ENCODE measurements at regions of chr11 and their contacts with region 1.

Region 1: GRCh38 chr11:120511116-120511819 is at the start of gene GRIK4:
- DNase-seq: peak; percentile 79 to 85
- ATAC-seq: peak; percentile 85 to 94 (median 90)
- H3K4me3 ChIP-seq: peak within 1 kb of the TSS in 9 of 10 donors; percentile 36 to 51 (median 44)
- H3K27ac ChIP-seq: no peak within 1 kb of the TSS
- H3K4me1 ChIP-seq: no peaks in the 10 kb centered on the region
- H3K27me3 ChIP-seq: peaks cover 4 to 84% (median 50%) of the 10 kb centered on the region in 7 donors
- CTCF ChIP-seq: peak; percentile 89 to 95 (median 94)
- total RNA-seq, gene GRIK4: 0.12 to 0.85 (median 0.46) TPM in 5 of 10 donors, not detected in the others

Region 2: DNA sequence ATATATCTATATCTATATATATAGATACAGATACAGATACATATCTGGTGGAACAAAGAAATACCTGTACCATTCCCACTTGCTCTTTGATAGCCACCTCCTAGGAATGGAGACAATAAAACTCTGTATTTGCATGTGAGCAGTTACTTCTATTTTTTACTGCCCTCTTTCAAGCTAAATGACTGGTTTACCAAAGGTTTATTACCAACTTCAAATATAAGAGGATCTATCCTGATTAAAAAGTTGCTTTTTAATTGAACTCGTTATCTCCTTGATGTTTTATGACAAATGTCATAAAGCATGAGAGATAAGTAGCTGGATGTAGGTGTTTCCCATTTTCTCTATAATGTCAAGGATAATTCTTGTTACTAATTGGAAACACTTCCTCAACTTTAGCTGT is 21.5 kb before region 1 on chr11:
- intact Hi-C with region 1: no loop called
- DNase-seq: no peak
- ATAC-seq: no peak
- H3K4me3 ChIP-seq: no peak overlapping the region
- H3K27ac ChIP-seq: no peak overlapping the region
- H3K4me1 ChIP-seq: peaks cover 0 to 11% (median 0%) of the 10 kb centered on the region in 9 donors
- H3K27me3 ChIP-seq: no peaks in the 10 kb centered on the region
- CTCF ChIP-seq: no peak

Region 3: DNA sequence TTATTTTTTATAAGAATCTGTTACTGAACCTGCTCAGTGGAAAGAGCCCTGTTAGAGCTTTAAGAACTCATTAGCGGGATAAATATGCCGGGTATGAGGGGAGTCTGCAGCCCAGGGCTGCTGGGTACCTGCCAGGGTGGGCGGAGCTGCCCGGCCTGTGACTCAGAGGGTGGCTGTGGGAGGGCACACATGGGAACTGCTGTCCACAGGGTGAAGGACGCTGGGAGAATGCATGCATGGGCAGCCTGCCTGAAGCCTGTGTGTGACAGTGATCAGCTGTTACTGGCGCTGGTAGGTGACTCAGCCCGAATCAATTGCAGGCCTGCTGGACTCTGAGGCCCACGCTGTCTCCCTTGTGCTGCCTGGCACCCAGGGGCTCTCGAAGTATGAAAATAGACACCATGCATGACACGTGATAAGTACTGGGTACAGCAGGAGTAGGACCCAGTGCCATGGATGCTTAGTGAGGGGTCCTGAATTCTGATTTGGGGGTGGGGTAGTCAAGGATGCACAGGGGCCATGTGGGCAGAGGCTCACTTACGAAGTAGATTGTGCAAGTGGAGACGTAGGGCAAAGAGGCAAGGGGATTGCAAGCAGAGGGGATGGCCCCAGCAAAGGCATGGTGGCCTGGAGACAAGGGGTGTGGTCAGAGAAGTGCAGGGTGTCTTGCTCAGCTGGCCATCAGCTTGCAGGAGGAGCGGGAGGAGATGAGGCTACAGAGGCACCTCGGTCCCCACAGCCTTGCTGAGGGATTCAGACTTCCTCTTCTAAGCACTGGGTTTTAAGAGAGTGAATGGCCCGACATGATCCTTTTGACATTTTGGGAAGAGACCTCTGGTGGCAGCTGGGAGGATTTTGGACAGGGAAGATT is 36.8 kb after region 1 on chr11:
- intact Hi-C with region 1: loop called in 1 of 10 experiments (anchors 5 kb)
- DNase-seq: peak; percentile 87 to 89
- ATAC-seq: peak; percentile 92 to 99 (median 97)
- H3K4me3 ChIP-seq: no peak overlapping the region
- H3K27ac ChIP-seq: peak overlapping the region; percentile 50 to 87 (median 72)
- H3K4me1 ChIP-seq: peaks cover 4 to 38% (median 21%) of the 10 kb centered on the region in 9 donors
- H3K27me3 ChIP-seq: peaks cover 0 to 9% (median 0%) of the 10 kb centered on the region in 7 donors
- CTCF ChIP-seq: peak in 5 of 9 donors; percentile 10 to 38 (median 24)

Region 4: DNA sequence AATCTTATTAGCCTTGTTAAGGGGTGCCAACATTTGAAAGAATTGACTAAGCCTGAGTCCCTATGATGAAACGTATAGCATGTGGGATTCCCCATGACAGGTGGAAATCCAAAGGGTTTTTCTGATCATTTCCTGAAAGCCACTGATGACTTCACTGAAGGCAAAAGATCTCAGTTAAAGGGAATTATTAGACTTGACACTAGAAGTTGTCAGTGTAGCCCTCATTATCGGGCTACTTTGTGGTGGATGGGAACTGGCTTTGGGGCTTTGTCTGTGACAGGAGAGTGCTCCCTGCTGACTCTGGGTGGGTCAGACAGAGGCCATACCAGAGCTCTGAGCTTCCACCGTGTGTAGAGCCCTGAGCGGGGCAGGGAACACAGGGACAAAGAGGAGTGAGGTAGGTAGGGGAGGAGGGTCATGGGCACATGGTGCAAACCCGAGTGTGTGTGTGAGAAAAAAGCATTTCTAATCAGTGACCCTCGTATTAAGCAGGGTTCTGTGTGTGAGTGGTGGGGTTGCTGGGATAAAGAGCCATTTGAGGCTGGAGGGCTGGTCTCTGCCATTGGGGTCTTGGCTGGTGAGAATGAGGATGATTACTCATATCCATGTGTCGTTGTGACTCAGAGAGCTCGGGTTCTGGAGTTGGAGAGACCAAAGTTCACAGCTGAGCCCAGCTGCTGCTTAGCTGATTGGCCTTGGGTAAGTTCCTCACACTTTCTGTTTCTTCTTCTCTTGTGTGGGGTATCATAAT is 101.4 kb after region 1 on chr11:
- intact Hi-C with region 1: no loop called
- DNase-seq: peak; percentile 12 to 21
- ATAC-seq: peak in 6 of 8 donors; percentile 37 to 78 (median 58)
- H3K4me3 ChIP-seq: no peak overlapping the region
- H3K27ac ChIP-seq: peak overlapping the region in 1 of 10 donors; percentile 56
- H3K4me1 ChIP-seq: peaks cover 0 to 14% (median 8%) of the 10 kb centered on the region in 9 donors
- H3K27me3 ChIP-seq: peaks cover 0 to 15% (median 0%) of the 10 kb centered on the region in 7 donors
- CTCF ChIP-seq: no peak

Region 5: DNA sequence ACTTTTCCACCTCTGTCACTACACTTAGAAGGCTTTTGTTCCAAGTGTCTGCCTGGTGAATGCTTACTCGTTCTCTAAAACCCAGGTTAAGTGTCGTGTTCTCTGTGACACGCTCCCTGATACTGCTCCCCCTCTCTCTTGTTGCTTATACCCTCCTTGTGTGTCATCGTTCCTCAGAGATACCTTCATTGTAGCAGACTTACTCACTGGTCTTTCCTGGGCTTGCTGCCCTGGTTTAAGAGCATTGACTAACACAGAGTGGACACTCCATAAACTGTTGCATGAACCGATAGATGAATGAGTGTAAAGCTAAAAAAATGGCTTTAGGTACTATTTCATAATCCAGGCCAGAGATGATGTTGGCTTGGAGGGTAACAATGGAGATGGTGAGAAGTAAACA is 171.6 kb after region 1 on chr11:
- intact Hi-C with region 1: loop called (anchors 1 to 2 kb)
- DNase-seq: no peak
- ATAC-seq: no peak
- H3K4me3 ChIP-seq: no peak overlapping the region
- H3K27ac ChIP-seq: no peak overlapping the region
- H3K4me1 ChIP-seq: no peaks in the 10 kb centered on the region
- H3K27me3 ChIP-seq: peaks cover 3 to 68% (median 41%) of the 10 kb centered on the region in 7 donors
- CTCF ChIP-seq: no peak

Region 6: GRCh38 chr11:120801801-120802689 is 290.8 kb after region 1 on chr11:
- intact Hi-C with region 1: loop called in 8 of 10 experiments (anchors 2 to 10 kb)
- DNase-seq: peak; percentile 44 to 47
- ATAC-seq: peak in 7 of 8 donors; percentile 33 to 67 (median 53)
- H3K4me3 ChIP-seq: no peak overlapping the region
- H3K27ac ChIP-seq: no peak overlapping the region
- H3K4me1 ChIP-seq: no peaks in the 10 kb centered on the region
- H3K27me3 ChIP-seq: peaks cover 0 to 85% (median 29%) of the 10 kb centered on the region in 7 donors
- CTCF ChIP-seq: peak; percentile 72 to 92 (median 88)

Region 7: GRCh38 chr11:120952461-120953434 is 441.5 kb after region 1 on chr11:
- intact Hi-C with region 1: loop called (anchors 1 to 10 kb)
- DNase-seq: peak; percentile 79 to 81
- ATAC-seq: peak; percentile 89 to 96 (median 94)
- H3K4me3 ChIP-seq: peak overlapping the region in 4 of 10 donors; percentile 23 to 32 (median 26)
- H3K27ac ChIP-seq: peak overlapping the region in 2 of 10 donors; percentile 28 to 44
- H3K4me1 ChIP-seq: peaks cover 0 to 10% (median 6%) of the 10 kb centered on the region in 9 donors
- H3K27me3 ChIP-seq: peaks cover 0 to 28% (median 24%) of the 10 kb centered on the region in 7 donors
- CTCF ChIP-seq: peak; percentile 39 to 77 (median 71)

Region 8: DNA sequence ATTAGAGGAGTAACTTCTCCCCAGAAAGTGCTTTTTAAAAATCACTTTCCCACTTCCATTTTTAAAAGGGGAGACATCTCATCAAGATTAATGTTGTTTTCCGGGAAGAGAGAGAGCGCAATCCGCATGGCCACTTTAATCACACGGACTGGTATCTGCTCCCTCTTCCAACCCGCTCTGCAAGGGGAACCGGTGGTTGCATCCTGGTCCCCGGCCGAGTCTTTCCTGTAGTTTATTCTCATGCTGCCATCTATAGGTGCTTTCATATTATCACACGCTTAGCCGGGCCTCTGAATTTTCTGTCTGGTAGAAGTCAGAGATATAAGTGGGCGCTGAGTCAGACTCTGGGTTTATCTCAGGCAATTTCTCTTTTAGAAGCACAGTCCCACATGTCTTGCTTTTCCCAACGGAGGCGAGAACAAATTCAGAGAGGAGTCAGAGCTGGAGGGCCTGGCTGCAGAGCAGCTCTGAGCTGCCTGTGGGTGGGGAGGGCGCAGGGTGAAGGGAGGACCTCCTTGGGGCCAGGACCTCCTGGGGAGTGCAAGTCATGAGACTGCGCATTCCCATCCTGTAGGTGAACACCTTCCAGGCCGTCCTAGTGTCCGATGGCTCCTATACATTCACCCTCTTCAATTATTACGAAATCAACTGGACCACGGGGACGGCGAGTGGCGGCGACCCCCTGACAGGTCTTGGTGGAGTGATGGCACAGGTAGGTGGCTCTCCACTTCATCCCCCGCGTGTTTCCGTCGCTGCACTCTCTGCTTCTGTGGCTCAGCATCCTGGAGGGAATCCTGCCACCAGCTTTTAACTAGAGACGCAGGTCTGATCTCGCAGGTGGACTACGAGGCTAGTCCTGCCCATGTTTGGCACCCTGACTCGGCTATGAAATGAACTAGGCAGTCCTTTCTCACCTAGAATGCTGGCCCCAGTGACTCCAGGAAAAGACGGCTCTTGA is 601.5 kb after region 1 on chr11:
- intact Hi-C with region 1: loop called in 7 of 10 experiments (anchors 1 to 10 kb)
- DNase-seq: peak; percentile 48 to 69
- ATAC-seq: peak; percentile 83 to 95 (median 90)
- H3K4me3 ChIP-seq: no peak overlapping the region
- H3K27ac ChIP-seq: no peak overlapping the region
- H3K4me1 ChIP-seq: peaks cover 0 to 19% (median 7%) of the 10 kb centered on the region in 9 donors
- H3K27me3 ChIP-seq: peaks cover 0 to 21% (median 0%) of the 10 kb centered on the region in 7 donors
- CTCF ChIP-seq: peak; percentile 37 to 76 (median 66)

Region 9: DNA sequence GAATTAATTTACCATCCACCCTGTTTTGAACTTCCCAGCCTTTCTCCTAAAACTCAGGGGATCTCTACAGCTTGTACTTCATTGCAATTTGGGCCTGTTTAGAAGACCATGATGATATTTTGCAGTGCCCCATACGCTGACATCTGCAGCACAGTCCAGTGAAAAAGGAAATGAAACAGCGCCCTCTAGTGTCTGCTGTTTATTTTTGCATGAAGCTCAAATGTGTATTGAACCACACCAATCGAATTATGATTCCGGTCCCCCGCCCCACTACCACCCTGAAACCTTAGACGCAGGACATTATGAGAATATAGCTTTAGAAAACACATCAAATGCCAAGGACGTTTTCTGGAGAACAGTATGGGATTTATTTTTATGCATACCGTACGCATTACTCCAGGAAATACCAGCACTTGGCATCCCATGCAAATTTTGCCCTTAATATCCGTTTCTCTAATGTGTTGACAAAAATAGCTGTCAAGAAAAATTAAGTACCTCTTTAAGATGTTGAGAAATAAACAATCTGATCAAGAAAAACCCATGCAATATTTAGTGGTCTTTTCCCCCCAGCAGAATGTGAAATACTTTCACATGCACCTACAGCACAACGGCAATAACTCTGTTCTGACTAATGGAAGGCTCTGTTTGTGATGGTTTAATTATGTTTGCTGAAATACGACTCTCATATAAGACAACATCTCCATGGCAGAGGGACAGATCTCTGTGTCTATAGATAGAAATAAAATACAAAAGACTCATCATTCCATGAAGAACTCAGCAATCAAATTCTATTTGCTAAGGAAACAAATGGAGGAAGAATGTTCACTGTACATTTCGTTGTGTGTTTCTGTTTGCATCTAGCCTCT is 683.7 kb after region 1 on chr11:
- intact Hi-C with region 1: loop called in 8 of 10 experiments (anchors 2 to 10 kb)
- DNase-seq: peak in 1 of 2 donors; percentile 57
- ATAC-seq: peak; percentile 61 to 83 (median 76)
- H3K4me3 ChIP-seq: no peak overlapping the region
- H3K27ac ChIP-seq: no peak overlapping the region
- H3K4me1 ChIP-seq: peaks cover 0 to 11% (median 0%) of the 10 kb centered on the region in 9 donors
- H3K27me3 ChIP-seq: peaks cover 0 to 31% (median 24%) of the 10 kb centered on the region in 7 donors
- CTCF ChIP-seq: peak; percentile 66 to 90 (median 83)

Measured in heart right ventricle (tissue), 16 donors.